Left ventricle myocardium inferior (tissue), 1 donor: ENCODE measurements at regions of chr5 and their contacts with region 1.

Region 1: GRCh38 chr5:88729084-88729828 is 153.7 kb downstream of the MEF2C start:
- DNase-seq: peak; percentile 15
- H3K4me3 ChIP-seq: no peak overlapping the region
- H3K27ac ChIP-seq: no peak overlapping the region
- H3K4me1 ChIP-seq: peaks cover 41% of the 10 kb centered on the region
- H3K27me3 ChIP-seq: no peaks in the 10 kb centered on the region
- CTCF ChIP-seq: peak; percentile 88

Region 2: DNA sequence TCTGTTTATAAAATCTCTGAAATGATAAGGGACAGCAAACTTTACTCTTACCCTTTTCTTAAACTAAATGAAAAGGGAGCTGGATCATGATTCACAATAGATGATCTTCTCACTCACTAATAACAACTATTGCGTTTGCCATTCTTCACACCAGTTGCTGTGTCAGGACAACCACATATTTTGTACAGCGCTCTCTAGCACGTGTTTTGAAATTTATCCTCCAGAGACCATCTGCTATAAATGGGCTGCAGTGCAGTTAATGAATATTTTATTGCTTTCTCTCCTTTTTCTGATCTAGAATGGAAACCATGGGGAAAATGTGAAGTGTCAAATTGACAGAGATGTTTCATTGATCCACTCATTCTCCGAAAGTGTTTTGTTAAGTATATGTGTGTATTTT is 1058.1 kb before region 1 on chr5:
- intact Hi-C with region 1: no loop called
- DNase-seq: no peak
- H3K4me3 ChIP-seq: no peak overlapping the region
- H3K27ac ChIP-seq: no peak overlapping the region
- H3K4me1 ChIP-seq: no peaks in the 10 kb centered on the region
- H3K27me3 ChIP-seq: no peaks in the 10 kb centered on the region
- CTCF ChIP-seq: no peak

Region 3: GRCh38 chr5:88450239-88450638 is 279.0 kb before region 1 on chr5:
- intact Hi-C with region 1: no loop called
- DNase-seq: no peak
- H3K4me3 ChIP-seq: no peak overlapping the region
- H3K27ac ChIP-seq: no peak overlapping the region
- H3K4me1 ChIP-seq: no peaks in the 10 kb centered on the region
- H3K27me3 ChIP-seq: no peaks in the 10 kb centered on the region
- CTCF ChIP-seq: no peak

Region 4: DNA sequence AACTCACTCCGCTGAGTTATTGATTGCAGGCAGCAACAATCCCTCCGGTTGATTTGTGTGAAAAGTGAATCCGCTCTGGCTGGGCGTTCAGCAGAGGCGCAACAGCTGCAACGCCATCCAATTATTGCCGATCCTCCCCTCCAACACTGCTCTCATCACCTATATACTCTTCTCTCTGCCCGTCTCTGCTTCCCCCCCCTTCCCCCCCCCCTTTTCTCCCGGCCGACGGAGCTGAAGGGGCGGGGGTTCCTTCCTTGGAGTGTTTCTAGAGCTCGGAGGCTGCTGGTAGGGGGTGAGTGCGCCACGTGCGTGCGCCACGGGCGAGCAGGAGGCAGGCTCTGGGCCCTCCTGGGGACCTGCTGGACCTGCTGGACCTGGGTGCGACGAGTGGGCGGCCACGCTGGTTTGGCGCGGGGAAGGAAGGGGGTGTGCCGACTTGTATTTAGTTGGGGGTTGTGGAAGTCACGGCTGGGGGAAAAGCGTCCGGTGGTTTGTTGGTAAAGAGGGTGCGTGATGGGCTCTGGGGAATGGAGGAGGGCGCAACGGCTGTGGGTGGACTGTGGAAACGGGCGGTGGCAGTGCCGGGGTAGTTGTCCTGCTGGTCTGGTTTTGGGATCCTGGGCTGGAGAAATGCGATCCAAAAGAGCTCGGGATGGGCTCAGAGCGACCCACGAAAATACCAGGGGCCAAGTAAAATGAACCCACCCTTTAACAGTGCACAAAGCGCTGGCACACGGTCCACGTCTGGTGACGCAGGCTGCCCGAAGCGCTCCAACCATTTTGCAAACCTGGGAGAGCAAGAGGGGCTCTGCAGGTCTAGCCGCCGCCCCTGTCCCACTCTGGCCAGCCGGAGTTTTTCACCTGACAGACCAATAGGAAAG is 160.2 kb after region 1 on chr5:
- intact Hi-C with region 1: loop called (anchors 5 kb)
- DNase-seq: peak; percentile 63
- H3K4me3 ChIP-seq: peak overlapping the region; percentile 79
- H3K27ac ChIP-seq: peak overlapping the region; percentile 94
- H3K4me1 ChIP-seq: peaks cover 55% of the 10 kb centered on the region
- H3K27me3 ChIP-seq: no peaks in the 10 kb centered on the region
- CTCF ChIP-seq: no peak

Region 5: DNA sequence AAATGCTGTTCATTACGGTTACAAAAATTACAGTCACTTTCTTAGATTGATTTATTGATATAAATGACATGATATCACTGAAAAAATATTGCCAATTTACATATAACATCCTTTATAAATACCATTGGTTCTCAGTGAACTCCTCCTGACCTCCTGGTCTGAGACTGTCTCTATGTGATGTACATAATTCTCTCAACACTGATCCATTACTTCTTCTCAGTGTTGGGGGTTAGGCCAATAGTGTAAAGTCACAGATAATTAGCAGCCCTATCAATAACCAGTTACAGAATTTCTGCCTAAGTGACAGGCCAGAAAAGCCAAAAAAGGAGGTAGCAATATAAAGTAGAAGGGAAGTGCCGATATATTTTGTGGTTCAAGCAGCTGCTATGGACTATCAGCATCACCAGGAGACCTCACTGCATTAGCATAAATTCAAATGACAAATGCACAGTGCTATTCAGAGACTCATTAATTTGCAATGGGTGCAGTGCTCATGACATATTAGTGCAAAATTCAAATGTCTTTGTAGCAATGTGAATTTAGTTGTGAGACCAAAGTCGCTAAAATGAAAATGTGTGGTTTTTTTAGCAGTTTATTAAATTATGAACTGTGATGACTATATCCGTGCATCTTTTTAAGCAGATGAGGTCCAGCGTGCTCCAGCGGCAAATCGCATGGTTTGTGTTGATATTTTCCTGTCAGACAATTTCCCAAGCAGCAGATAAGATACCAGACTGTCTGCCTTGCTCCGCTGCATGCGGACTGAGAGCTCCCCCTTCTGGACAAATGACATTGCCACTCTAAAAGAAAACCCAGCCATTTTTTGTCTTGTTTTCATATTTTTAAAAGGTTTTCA is 1535.7 kb after region 1 on chr5:
- intact Hi-C with region 1: loop called (anchors 5 kb)
- DNase-seq: peak; percentile 31
- H3K4me3 ChIP-seq: no peak overlapping the region
- H3K27ac ChIP-seq: no peak overlapping the region
- H3K4me1 ChIP-seq: peaks cover 6% of the 10 kb centered on the region
- H3K27me3 ChIP-seq: no peaks in the 10 kb centered on the region
- CTCF ChIP-seq: peak; percentile 96